HEK293 (cell line): ENCODE measurements at regions of chr22 and their contacts with region 1.

Region 1: DNA sequence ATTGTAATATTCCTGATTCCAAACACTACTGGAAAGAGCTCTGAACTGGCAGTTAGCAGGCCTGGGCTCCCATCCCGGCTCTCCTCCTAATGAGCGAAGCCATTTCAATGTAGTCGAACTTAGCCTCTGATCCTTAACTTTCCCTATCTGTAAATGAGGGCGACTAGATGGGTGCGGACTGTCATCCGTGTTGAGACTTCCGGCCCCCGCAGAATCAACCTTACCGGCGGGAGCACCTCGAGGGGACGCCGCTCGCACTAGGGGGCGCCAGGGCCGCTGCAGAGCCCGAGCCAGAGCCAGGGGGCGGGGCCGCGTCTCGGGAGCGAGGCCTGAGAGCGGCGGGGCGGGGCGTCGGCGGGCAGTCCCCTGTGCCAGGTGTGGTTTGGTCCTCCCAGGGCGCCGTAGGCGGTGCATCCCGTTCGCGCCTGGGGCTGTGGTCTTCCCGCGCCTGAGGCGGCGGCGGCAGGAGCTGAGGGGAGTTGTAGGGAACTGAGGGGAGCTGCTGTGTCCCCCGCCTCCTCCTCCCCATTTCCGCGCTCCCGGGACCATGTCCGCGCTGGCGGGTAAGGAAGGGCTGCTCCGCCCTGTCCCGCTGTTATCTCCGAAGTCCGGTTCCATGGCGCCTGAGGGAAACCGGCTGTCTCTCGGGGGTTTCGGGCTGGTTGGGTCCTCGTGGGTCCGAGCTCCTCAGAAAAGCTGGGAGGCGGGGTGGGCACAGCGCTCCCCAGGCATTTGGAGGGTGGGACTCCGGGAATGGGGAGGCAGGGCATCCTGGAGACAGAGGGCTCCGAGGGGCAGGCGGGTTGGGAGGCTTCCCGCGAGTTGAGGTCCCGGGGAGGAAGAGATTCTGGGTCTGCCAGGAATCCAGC is at the start of gene LIMK2:
- H3K4me3 ChIP-seq: peak within 1 kb of the TSS; percentile 92
- H3K27ac ChIP-seq: peak within 1 kb of the TSS; percentile 65; the same call in 1 of the 2 replicates
- H3K4me1 ChIP-seq: 0 out of 2 replicates have a peak, but pooled peaks cover 4% of the 10 kb centered on the region
- CTCF ChIP-seq: peak; percentile 91

Region 2: DNA sequence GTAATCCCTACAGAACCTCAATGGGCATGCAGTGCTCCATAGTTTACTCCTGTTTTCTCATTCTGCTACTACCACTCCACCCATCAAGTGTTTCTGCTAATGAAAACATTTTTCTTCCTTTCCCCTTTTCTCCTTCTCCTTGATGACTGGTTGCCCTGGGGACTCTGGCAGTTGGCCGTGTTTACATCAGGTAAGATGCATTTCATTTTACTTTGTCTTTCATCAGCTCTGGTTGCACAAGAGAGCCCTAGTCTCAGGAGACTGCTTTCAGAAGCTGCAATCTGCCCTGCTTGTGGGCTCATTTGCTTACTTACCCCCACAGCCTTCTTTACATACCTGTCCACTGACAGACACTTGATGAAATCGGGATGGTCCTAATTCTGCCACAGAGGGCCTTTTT is 19.6 kb before region 1 on chr22:
- CTCF ChIA-PET with region 1: interaction called, 19 read pairs
- POLR2A ChIA-PET with region 1: no interaction called
- H3K4me3 ChIP-seq: no peak overlapping the region
- H3K27ac ChIP-seq: no peak overlapping the region
- H3K4me1 ChIP-seq: no peaks in the 10 kb centered on the region
- CTCF ChIP-seq: no peak

Region 3: GRCh38 chr22:31223786-31224191 is 11.7 kb after region 1 on chr22:
- CTCF ChIA-PET with region 1: interaction called, 70 read pairs
- POLR2A ChIA-PET with region 1: interaction called, 3 read pairs
- H3K4me3 ChIP-seq: no peak overlapping the region
- H3K27ac ChIP-seq: no peak overlapping the region
- H3K4me1 ChIP-seq: peaks cover 12% of the 10 kb centered on the region
- CTCF ChIP-seq: no peak

Region 4: GRCh38 chr22:31248138-31248745 is 36.1 kb after region 1 on chr22:
- CTCF ChIA-PET with region 1: interaction called, 31 read pairs
- POLR2A ChIA-PET with region 1: no interaction called
- H3K4me3 ChIP-seq: no peak overlapping the region
- H3K27ac ChIP-seq: peak overlapping the region; percentile 21; the same call in 1 of the 2 replicates
- H3K4me1 ChIP-seq: peaks cover 2% of the 10 kb centered on the region; the same call in 1 of the 2 replicates
- CTCF ChIP-seq: no peak

Region 5: DNA sequence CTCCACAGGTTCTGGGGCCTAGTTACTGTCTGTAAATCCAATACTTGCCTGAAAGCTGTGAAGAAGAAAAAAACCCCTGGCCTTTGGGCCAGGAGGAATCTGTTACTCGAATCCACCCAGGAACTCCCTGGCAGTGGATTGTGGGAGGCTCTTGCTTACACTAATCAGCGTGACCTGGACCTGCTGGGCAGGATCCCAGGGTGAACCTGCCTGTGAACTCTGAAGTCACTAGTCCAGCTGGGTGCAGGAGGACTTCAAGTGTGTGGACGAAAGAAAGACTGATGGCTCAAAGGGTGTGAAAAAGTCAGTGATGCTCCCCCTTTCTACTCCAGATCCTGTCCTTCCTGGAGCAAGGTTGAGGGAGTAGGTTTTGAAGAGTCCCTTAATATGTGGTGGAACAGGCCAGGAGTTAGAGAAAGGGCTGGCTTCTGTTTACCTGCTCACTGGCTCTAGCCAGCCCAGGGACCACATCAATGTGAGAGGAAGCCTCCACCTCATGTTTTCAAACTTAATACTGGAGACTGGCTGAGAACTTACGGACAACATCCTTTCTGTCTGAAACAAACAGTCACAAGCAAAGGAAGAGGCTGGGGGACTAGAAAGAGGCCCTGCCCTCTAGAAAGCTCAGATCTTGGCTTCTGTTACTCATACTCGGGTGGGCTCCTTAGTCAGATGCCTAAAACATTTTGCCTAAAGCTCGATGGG is 66.7 kb after region 1 on chr22:
- CTCF ChIA-PET with region 1: interaction called, 117 read pairs
- POLR2A ChIA-PET with region 1: no interaction called
- H3K4me3 ChIP-seq: no peak overlapping the region
- H3K27ac ChIP-seq: no peak overlapping the region
- H3K4me1 ChIP-seq: no peaks in the 10 kb centered on the region
- CTCF ChIP-seq: no peak

Region 6: DNA sequence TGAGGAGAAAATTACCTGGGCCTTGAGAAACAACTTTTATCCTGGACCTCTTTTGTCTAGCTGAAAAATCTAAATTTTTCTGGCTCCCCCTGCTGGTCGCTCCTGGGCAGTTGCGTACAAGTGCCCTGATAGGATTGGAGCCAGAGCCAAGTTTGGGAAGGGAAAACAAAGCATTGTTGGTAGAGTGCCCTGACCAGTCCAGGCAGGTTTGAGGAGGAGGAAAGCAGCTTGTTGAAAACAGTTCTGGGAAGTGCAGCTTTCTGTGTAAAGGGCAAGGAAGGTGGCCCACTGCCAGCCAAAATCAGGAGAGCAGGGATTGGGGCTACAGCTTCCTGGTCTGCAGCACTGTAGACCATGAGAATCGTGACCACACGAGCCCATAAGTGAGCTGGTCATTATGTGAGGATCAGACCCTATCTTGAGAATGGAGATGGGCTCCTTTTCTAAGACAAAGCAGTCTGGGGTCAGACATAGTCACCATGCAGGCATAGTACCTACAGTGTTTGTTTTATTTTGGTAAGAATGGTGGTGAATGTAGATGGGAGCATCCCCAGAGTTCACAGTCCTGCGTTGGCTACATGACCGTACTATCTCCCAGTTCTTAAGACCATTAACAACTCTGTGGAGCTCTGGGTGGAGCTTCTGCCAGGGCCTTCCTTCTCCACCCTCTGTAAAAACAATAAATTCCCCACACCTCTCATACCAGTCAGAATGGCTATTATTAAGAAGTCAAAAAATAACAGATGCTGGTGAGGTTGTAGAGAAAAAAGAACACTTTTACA is 101.5 kb after region 1 on chr22:
- CTCF ChIA-PET with region 1: interaction called, 14 read pairs
- POLR2A ChIA-PET with region 1: interaction called, 4 read pairs
- H3K4me3 ChIP-seq: no peak overlapping the region
- H3K27ac ChIP-seq: no peak overlapping the region
- H3K4me1 ChIP-seq: no peaks in the 10 kb centered on the region
- CTCF ChIP-seq: peak; percentile 31; the same call in 1 of the 2 replicates

Region 7: DNA sequence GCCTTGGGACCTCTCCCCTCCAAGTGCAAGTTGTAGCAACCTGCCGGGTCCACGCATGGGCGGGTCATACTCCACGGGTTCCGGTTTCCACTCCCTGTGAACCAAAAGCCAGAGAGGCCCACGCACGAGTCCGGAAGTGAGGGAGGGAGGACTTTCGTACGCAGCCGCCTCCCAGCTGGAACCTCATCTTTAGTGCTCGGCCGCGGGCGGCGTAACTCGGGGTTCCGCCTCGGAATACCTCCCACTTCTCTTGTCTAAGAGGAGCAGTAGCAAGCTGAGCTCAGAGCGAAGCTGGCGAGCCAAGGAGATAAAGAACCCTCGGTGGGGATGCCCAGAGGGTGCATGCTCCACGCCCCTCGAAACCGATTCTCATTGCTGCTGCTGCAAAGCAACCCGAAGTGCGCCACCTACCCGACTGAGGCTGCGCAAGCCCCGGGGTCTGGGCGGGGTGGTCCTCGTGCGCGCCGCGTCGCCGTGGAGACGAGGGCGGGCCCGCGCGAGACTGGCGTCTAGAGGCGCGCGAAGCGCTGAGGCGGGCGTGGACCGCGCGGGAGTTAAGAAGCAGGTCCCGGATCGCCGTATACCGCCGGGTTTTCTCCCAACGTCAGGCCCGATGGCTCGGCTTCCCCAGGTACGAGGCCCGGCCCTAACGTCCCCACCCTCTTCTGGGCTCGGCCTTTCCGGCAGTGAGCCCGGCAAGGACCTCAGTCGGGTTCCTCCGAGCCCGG is 284.1 kb after region 1 on chr22 and contains the start of gene SFI1:
- CTCF ChIA-PET with region 1: no interaction called
- POLR2A ChIA-PET with region 1: no interaction called
- H3K4me3 ChIP-seq: peak within 1 kb of the TSS; percentile 59
- H3K27ac ChIP-seq: peak within 1 kb of the TSS; percentile 62
- H3K4me1 ChIP-seq: 0 out of 2 replicates have a peak, but pooled peaks cover 2% of the 10 kb centered on the region
- CTCF ChIP-seq: peak; percentile 89